ENCODE measurements at regions of chr10 and their contacts with region 1.

Region 1: GRCh38 chr10:132458593-132459300 is 61.7 kb downstream of the PWWP2B start:
- DNase-seq: no peak
- H3K4me3 ChIP-seq: no peak overlapping the region
- H3K27me3 ChIP-seq: no peaks in the 10 kb centered on the region; the same call in 1 of the 2 replicates
- CTCF ChIP-seq: peak; percentile 86

Region 2: DNA sequence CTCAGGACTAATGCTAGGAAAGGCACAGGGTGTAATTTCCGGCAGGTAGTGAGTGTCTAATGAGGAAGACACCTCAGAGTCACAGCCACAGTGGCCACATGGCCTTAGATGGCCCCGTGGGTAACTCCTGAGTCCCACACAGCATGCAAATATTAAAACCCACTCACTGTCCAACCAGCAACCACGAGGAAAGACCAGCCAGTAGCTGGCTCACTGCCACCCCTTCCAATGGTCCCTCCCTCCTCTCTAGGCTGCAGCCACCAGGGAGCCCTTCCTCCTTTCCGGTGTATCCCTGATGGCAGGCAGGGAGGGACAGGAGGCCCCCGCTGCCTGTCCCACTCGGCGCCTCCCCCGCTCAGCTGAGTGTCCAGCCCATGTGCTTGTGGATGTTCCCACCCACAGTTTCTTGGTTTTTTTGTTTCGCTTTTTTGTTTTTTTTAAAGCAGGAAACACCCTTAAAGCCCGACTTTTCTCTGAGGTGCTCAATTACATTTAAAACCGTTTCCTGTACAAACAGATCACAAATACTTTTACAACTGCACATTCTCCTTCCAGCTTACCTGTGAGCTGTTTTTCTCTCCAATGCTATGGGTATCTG is 486.2 kb before region 1 on chr10:
- CTCF ChIA-PET with region 1: no interaction called
- POLR2A ChIA-PET with region 1: no interaction called
- DNase-seq: no peak
- H3K4me3 ChIP-seq: no peak overlapping the region
- H3K27me3 ChIP-seq: no peaks in the 10 kb centered on the region
- CTCF ChIP-seq: no peak

Region 3: GRCh38 chr10:132540456-132540855 is 81.7 kb after region 1 on chr10:
- CTCF ChIA-PET with region 1: interaction called, 19 read pairs
- POLR2A ChIA-PET with region 1: no interaction called
- DNase-seq: no peak
- H3K4me3 ChIP-seq: peak overlapping the region; percentile 30; the same call in 1 of the 2 replicates
- H3K27me3 ChIP-seq: no peaks in the 10 kb centered on the region
- CTCF ChIP-seq: peak; percentile 66

Region 4: GRCh38 chr10:132637477-132638129 is 178.9 kb after region 1 on chr10:
- CTCF ChIA-PET with region 1: interaction called, 42 read pairs
- POLR2A ChIA-PET with region 1: no interaction called
- DNase-seq: no peak
- H3K4me3 ChIP-seq: no peak overlapping the region
- H3K27me3 ChIP-seq: no peaks in the 10 kb centered on the region
- CTCF ChIP-seq: peak; percentile 70

Region 5: DNA sequence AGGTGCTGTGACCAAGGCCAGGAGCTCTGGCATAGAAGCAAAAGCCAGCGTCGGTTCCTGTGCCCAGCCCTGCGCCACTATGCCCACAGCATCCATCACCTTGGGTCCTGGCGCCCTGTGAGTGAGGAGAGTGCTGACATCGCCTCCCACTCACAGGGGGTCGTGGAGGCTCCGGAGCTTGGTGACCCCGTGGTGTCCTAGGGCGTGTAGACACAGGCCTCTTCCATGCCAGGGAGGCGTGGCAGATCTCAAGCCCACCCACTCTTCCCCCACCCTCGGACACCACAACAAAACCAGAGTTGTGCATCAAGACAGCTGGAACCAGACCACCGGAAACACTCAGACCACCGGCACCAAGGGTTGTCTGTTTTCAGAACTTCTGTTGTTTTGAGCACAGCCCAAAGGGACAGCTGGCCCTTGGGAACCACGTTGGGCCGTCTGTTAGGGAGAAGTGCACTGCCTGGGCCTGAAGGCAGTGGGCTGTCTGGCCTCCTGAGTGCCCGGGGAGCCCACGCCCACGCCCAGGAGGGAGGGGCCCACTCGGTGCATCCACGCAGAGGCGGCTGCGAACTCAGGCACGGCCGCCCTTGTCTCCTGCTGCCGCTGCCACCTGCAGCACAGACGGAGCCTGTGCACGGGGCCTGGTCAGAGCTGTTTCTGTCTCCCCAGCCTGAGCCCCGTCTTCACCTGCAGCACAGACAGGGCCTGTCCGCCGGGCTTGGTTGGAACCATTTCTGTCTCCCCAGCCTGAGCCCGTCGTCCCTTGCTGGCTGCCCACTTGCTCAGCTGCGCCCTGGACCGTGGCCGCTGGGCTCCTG is 185.2 kb after region 1 on chr10:
- CTCF ChIA-PET with region 1: interaction called, 31 read pairs
- POLR2A ChIA-PET with region 1: no interaction called
- DNase-seq: no peak
- H3K4me3 ChIP-seq: no peak overlapping the region
- H3K27me3 ChIP-seq: no peaks in the 10 kb centered on the region
- CTCF ChIP-seq: no peak

Measured in BJ (cell line).